ENCODE measurements at regions of chr10 and their contacts with region 1.

Region 1: DNA sequence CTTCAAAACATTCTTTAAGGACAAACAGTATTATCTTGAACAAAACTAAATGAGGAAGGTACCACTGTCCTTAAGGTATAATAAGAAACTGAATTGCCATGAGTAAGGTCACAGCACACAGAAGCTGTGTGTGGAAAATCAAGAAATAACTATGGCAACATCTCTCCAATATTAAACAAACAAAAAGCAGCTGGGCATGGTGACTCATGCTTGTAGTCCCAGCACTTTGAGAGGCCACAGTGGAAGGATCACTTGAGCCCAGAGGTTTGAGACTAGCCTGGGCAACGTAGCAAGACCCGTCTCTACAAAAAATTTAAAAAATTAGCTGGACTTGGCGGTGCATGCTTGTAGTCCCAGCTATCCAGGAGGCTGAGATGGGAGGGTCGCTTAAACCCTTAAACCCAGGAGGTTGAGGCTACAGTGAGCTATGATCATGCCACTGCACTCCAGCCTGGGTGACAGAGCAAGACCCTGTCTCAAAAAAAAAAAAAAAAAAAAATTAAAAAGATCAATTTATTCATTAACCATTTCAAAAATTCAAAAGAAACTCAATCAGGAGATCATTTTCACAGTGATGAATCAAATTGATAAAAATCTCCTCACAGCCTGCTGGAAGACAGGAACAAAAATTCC is 195.4 kb downstream of the SKIDA1 start:
- DNase-seq: peak; percentile 95
- H3K4me3 ChIP-seq: peak overlapping the region in 1 of 3 experiments; percentile 40
- H3K27ac ChIP-seq: peak overlapping the region; percentile 97
- H3K4me1 ChIP-seq: peaks cover 21% of the 10 kb centered on the region
- H3K27me3 ChIP-seq: no peaks in the 10 kb centered on the region
- CTCF ChIP-seq: no peak
- POLR2A ChIP-seq: no peak

Region 2: DNA sequence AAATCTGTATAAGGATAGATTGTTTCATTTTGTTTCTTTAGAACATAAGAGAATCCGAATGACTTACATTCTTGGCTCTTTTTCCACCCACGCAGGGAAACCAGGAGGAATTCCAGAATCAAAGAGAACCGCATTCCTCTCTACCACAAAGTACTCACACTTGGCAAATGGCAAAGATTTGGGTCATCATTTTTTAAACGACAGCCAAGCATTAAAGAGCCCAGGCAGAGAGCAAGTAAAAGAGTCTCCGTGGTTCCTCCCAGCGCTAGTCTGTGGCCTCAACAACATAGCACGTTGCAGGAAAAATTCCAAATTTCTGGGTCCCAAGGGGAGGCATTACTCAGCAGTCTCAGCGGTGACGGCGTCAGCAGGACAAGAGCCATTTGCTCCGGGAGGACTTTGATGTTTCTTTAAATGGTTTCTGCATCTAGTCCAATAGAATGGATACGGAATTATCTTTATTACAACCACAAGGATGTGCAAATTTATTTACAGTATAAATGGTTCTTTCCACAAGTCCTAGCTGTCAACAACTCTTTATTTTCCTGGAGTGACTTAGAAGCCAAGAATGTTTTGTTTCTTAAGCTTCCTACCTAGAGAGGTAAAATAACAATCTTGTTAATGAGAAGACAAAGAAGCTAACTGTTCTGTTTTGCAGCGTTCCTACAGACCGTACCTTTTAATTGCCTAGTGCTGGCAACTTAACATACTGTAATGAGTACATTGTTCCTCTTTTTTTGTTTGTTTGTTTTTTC is 37.2 kb before region 1 on chr10:
- CTCF ChIA-PET with region 1: interaction called, 6 read pairs
- POLR2A ChIA-PET with region 1: interaction called, 6 read pairs
- dilution Hi-C with region 1: no loop called
- intact Hi-C with region 1: loop called (anchors 1 kb)
- DNase-seq: peak; percentile 82
- H3K4me3 ChIP-seq: peak overlapping the region; percentile 2 to 57 (median 32)
- H3K27ac ChIP-seq: peak overlapping the region; percentile 83
- H3K4me1 ChIP-seq: peaks cover 19% of the 10 kb centered on the region
- H3K27me3 ChIP-seq: no peaks in the 10 kb centered on the region
- CTCF ChIP-seq: no peak
- POLR2A ChIP-seq: no peak

Region 3: DNA sequence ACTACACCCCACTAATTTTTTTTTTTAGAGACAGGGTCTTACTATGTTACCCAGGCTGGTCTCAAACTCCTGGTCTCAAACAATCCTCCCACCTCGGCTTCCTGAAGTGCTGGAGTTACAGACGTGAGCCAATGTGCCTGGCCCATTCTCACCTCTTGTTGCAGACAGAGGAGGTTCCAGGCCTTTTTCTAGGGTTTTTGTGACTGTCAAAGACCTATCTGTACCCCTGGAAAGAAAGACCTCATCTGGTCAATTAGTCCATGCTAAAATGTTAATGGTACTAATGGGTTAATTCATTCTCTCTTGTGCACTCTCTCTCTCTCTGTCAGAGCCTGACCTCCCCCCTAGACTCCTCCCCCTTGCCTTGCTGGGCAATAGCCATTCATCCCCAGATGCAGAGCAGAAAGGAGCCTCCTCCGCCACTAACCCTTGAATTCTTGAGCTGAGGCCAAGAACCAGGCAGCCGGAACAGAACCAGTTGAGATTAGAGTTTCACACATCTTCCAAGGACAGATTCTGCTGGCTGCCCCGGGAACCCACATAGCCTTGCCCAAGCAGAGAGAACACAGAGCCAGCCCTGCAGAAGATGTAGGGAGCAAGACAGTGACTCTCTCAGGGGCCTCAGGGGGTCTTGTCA is 14.3 kb before region 1 on chr10:
- CTCF ChIA-PET with region 1: interaction called, 7 read pairs
- POLR2A ChIA-PET with region 1: no interaction called
- dilution Hi-C with region 1: no loop called
- intact Hi-C with region 1: loop called (anchors 1 kb)
- DNase-seq: peak; percentile 90
- H3K4me3 ChIP-seq: no peak overlapping the region
- H3K27ac ChIP-seq: peak overlapping the region; percentile 50
- H3K4me1 ChIP-seq: peaks cover 24% of the 10 kb centered on the region
- H3K27me3 ChIP-seq: no peaks in the 10 kb centered on the region
- CTCF ChIP-seq: no peak
- POLR2A ChIP-seq: peak; percentile 31

Region 4: DNA sequence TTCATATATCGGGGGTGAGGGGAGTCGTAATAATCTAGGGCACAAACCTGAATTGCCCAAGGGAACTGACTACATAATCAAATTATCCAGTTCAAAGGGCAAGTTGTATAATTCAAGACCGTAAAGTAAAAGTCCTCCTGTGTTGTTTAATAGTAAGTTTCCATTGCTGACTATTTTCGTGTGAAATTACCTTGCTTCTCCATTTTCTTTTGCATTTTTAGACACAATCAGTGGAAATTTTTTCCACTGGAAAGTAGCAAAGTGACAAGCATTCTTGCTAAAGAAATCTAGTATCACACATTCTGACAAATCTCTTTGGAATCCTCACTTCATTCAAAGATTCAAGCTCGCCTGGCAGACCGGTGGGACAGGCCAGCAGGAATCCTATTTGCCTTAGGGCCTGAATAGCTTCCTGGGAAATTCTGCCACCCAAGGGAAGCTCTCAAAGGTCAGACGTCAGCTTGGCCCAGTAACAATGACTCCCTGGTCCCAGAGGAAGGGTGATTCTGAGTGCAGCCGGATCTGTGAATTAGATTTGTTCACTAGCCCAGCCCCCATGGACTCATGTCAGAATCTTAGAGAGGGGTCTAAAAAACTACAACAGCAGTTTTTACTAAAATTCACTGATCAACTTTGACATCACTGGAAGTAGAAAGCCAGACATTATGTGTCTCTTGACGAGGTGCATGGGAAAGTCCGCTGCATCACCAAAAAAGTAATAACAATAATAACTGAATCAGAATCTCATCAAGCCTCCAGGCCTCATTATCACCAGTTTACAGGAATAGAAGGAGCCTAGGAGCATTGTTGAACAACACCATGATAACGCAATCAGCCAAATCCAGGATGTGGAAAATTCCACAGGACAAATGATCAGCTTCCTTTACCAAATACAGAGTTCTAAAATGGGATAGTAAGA is 34.3 kb after region 1 on chr10:
- CTCF ChIA-PET with region 1: interaction called, 4 read pairs
- POLR2A ChIA-PET with region 1: interaction called, 11 read pairs
- dilution Hi-C with region 1: no loop called
- intact Hi-C with region 1: loop called (anchors 1 kb)
- DNase-seq: peak; percentile 97
- H3K4me3 ChIP-seq: no peak overlapping the region
- H3K27ac ChIP-seq: peak overlapping the region; percentile 96
- H3K4me1 ChIP-seq: peaks cover 40% of the 10 kb centered on the region
- H3K27me3 ChIP-seq: no peaks in the 10 kb centered on the region
- CTCF ChIP-seq: no peak
- POLR2A ChIP-seq: no peak

Region 5: DNA sequence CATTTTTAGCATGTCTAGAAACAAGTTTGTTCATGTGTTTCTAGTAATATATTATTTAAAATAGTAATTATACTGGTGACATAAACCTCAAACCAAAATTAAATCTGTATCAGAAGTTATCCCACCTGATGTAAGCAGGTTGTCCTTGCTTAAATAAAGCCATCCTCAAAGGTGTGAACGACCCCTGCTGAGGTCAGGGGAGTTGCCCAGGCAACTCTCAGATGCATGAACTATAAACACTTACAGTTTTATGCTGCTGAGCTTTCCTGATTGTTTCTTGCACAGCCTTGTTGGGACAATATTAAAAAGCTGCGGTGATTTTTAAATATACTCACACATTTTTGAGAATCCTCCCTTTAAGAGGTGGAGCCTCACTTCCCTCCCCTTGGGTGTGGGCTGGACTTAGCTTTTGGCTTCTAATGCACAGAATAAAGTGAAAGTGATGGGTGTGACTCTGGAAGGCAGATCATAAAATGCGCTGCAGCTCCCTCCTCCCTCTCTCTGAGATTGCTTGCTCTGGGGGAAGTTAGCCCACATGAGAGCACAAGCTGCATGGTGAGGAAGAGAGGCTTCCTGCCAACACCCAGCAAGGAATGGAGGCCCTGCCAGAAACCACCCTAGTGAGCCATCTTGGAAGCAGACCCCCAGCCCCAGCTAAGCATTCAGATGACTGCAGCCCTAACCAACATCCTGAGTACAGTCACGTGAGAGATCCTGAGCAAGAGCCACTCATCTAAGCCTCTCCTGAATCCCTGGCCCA is 42.7 kb after region 1 on chr10:
- CTCF ChIA-PET with region 1: interaction called, 4 read pairs
- POLR2A ChIA-PET with region 1: no interaction called
- dilution Hi-C with region 1: no loop called
- intact Hi-C with region 1: loop called (anchors 1 kb)
- DNase-seq: peak; percentile 88
- H3K4me3 ChIP-seq: peak overlapping the region in 1 of 3 experiments; percentile 15
- H3K27ac ChIP-seq: peak overlapping the region; percentile 14
- H3K4me1 ChIP-seq: peaks cover 26% of the 10 kb centered on the region
- H3K27me3 ChIP-seq: no peaks in the 10 kb centered on the region
- CTCF ChIP-seq: no peak
- POLR2A ChIP-seq: no peak

Region 6: GRCh38 chr10:21406595-21407193 is 76.6 kb after region 1 on chr10:
- CTCF ChIA-PET with region 1: no interaction called
- POLR2A ChIA-PET with region 1: no interaction called
- dilution Hi-C with region 1: no loop called
- intact Hi-C with region 1: loop called (anchors 2 kb)
- DNase-seq: peak; percentile 47
- H3K4me3 ChIP-seq: no peak overlapping the region
- H3K27ac ChIP-seq: peak overlapping the region; percentile 39
- H3K4me1 ChIP-seq: peaks cover 8% of the 10 kb centered on the region
- H3K27me3 ChIP-seq: no peaks in the 10 kb centered on the region
- CTCF ChIP-seq: no peak
- POLR2A ChIP-seq: no peak

Region 7: DNA sequence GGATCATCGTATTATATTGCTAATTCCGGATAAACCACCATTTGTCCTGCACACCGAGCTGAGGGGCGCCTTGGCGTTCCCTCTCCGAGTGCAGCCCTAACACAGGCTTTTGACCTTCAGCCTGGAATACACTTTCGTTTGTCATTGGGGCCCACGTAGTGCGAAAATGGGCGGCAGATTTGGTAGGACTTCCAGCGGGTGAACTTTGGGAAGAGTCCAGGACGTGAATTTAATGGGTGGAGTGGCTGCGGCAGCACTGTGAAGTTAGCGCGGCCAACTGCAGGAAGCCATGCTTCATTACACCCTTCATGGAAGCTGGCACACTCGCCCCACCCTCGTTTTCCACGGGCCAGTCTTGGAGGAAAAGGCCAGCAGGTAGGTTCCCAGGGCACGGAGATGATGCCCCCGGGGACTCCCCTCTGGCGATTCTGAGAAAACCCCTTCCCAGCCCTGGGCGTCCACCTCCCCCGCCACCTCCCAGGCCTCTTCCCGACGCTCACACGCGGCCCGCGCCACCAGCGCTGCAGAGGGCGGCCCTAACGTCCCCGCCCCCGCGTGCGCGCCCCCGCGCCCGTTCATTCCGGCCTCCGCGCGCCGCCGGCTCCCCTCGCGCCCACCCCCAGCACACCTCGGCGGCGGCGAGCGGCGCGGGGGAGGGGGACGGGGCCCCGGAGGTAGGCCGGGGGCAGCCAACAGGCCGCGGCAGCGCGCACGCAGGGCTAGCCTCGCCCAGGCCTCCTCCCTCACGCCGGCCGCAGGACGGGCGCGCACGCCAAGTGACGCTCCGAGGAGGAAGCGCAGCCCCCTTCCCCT is 203.6 kb after region 1 on chr10 and contains the start of gene MLLT10:
- CTCF ChIA-PET with region 1: no interaction called
- POLR2A ChIA-PET with region 1: no interaction called
- dilution Hi-C with region 1: no loop called
- intact Hi-C with region 1: loop called (anchors 1 kb)
- DNase-seq: peak; percentile 97
- H3K4me3 ChIP-seq: peak within 1 kb of the TSS; percentile 80 to 93 (median 83)
- H3K27ac ChIP-seq: peak within 1 kb of the TSS; percentile 60
- H3K4me1 ChIP-seq: peaks cover 17% of the 10 kb centered on the region
- H3K27me3 ChIP-seq: no peaks in the 10 kb centered on the region
- CTCF ChIP-seq: no peak
- POLR2A ChIP-seq: peak; percentile 83
- total RNA-seq, gene MLLT10: 54.0 and 54.6 TPM in 2 replicates

Measured in endothelial cell of umbilical vein (primary cell).